ENCODE measurements at regions of chr10 and their contacts with region 1.

Region 1: DNA sequence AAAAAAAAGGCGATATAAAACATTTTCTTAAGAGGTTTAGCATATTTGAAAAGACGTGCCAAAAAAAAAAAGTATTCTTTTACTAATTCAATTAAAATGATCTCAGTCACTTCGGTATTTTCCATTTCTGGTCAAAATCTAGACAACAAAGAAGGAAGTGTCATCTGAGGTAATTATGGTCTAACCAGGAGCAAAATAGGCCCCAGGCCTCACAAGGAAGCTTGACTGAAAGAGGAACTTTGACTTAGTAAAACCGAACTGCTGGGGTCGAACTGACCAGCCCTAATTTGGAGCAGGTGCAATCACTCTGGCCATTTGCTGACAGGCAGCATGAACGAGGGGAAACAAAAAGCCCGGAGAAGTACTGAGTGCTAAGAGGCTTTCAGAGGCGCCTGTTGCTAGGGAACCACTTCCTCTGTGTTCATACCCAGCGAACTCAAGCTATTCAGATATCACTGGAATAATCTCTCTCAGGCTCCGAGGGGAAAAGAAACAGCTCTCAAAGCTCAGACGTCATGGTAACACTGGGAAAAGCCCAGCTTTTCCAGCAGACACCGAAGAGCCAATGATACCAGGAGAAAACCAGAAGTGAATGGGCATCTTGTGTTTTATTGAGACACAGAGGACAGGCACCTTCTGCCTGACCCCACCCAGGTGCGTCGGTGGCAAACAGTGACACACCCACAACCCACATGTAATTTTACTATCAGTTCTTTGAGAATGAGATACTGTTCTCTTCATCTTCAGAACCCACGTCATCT is 126.5 kb downstream of the FAM107B start:
- DNase-seq: peak; percentile 52 to 92 (median 74)
- ATAC-seq: peak; percentile 86
- H3K4me3 ChIP-seq: peak overlapping the region; percentile 41 to 50
- H3K4me3 Mint-ChIP-seq: peak overlapping the region; percentile 86
- H3K27ac ChIP-seq: peak overlapping the region; percentile 89 to 94
- H3K27ac Mint-ChIP-seq: peak overlapping the region; percentile 99
- H3K4me1 ChIP-seq: peaks cover 26% of the 10 kb centered on the region
- H3K4me1 Mint-ChIP-seq: peaks cover 48% of the 10 kb centered on the region
- H3K27me3 ChIP-seq: no peaks in the 10 kb centered on the region
- H3K27me3 Mint-ChIP-seq: no peaks in the 10 kb centered on the region
- CTCF ChIP-seq: no peak

Region 2: GRCh38 chr10:14564268-14564744 is 83.9 kb before region 1 on chr10:
- CTCF ChIA-PET with region 1: interaction called, 7 read pairs
- POLR2A ChIA-PET with region 1: interaction called, 4 read pairs
- intact Hi-C with region 1: loop called (anchors 2 to 5 kb)
- DNase-seq: peak in 3 of 9 experiments; percentile 45 to 85 (median 75)
- ATAC-seq: peak; percentile 57
- H3K4me3 ChIP-seq: peak overlapping the region in 1 of 2 experiments; percentile 21
- H3K4me3 Mint-ChIP-seq: peak overlapping the region; percentile 80
- H3K27ac ChIP-seq: peak overlapping the region; percentile 77 to 79
- H3K27ac Mint-ChIP-seq: peak overlapping the region; percentile 98
- H3K4me1 ChIP-seq: peaks cover 90% of the 10 kb centered on the region
- H3K4me1 Mint-ChIP-seq: peaks cover 88% of the 10 kb centered on the region
- H3K27me3 ChIP-seq: no peaks in the 10 kb centered on the region
- H3K27me3 Mint-ChIP-seq: no peaks in the 10 kb centered on the region
- CTCF ChIP-seq: no peak

Region 3: GRCh38 chr10:14571866-14572507 is 76.2 kb before region 1 on chr10:
- CTCF ChIA-PET with region 1: no interaction called
- POLR2A ChIA-PET with region 1: interaction called, 4 read pairs
- intact Hi-C with region 1: loop called in 1 of 2 experiments (anchors 1 kb)
- DNase-seq: peak; percentile 46 to 91 (median 68)
- ATAC-seq: peak; percentile 66
- H3K4me3 ChIP-seq: peak overlapping the region; percentile 58 to 65
- H3K4me3 Mint-ChIP-seq: peak overlapping the region; percentile 88
- H3K27ac ChIP-seq: peak overlapping the region; percentile 82 to 89
- H3K27ac Mint-ChIP-seq: peak overlapping the region; percentile 97
- H3K4me1 ChIP-seq: peaks cover 66% of the 10 kb centered on the region
- H3K4me1 Mint-ChIP-seq: peaks cover 89% of the 10 kb centered on the region
- H3K27me3 ChIP-seq: no peaks in the 10 kb centered on the region
- H3K27me3 Mint-ChIP-seq: no peaks in the 10 kb centered on the region
- CTCF ChIP-seq: no peak

Region 4: GRCh38 chr10:14604181-14605142 is 43.7 kb before region 1 on chr10:
- CTCF ChIA-PET with region 1: no interaction called
- POLR2A ChIA-PET with region 1: no interaction called
- intact Hi-C with region 1: loop called (anchors 1 to 2 kb)
- DNase-seq: peak; percentile 39 to 86 (median 73)
- ATAC-seq: peak; percentile 71
- H3K4me3 ChIP-seq: peak overlapping the region; percentile 55 to 66
- H3K4me3 Mint-ChIP-seq: peak overlapping the region; percentile 93
- H3K27ac ChIP-seq: peak overlapping the region; percentile 48
- H3K27ac Mint-ChIP-seq: peak overlapping the region; percentile 94
- H3K4me1 ChIP-seq: peaks cover 44% of the 10 kb centered on the region
- H3K4me1 Mint-ChIP-seq: peaks cover 50% of the 10 kb centered on the region
- H3K27me3 ChIP-seq: no peaks in the 10 kb centered on the region
- H3K27me3 Mint-ChIP-seq: no peaks in the 10 kb centered on the region
- CTCF ChIP-seq: peak; percentile 16

Region 5: DNA sequence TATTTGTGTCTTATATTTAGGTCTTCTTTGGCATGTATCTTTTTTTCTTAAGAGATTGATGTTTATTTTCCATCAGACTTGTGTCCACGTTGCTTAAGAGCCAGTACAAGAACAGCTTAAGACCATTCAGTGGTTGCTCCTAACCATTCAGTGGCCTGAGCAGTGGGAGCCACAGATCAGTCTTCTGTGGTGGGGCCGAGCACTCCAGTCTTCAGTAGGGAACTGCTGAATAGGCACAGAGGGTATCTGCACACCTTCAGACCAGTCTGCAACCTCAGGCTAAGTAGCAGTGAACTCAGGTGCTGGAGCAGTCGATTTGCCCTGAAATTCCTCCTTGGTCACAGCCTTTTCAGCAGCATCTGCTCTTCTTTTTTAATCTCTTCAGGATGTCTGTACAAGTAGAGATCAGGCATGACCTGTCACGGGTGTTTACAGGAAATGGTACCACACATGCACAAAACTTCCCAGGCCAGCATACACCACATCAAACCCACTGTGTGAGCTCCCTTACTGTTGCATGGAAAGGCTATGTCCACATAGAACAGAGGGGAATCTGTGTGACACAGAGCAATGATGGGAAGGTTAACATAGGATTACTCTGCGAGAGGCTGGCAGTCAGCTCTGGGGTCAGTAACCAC is 75.0 kb after region 1 on chr10:
- CTCF ChIA-PET with region 1: no interaction called
- POLR2A ChIA-PET with region 1: no interaction called
- intact Hi-C with region 1: loop called in 1 of 2 experiments (anchors 1 kb)
- DNase-seq: peak in 6 of 9 experiments; percentile 15 to 74 (median 50)
- ATAC-seq: peak; percentile 67
- H3K4me3 ChIP-seq: no peak overlapping the region
- H3K4me3 Mint-ChIP-seq: peak overlapping the region; percentile 17
- H3K27ac ChIP-seq: peak overlapping the region in 1 of 2 experiments; percentile 58
- H3K27ac Mint-ChIP-seq: peak overlapping the region; percentile 84
- H3K4me1 ChIP-seq: peaks cover 36% of the 10 kb centered on the region
- H3K4me1 Mint-ChIP-seq: peaks cover 34% of the 10 kb centered on the region
- H3K27me3 ChIP-seq: no peaks in the 10 kb centered on the region
- H3K27me3 Mint-ChIP-seq: no peaks in the 10 kb centered on the region
- CTCF ChIP-seq: no peak

Region 6: GRCh38 chr10:14878266-14879054 is 230.3 kb after region 1 on chr10 and contains the start of gene SUV39H2:
- CTCF ChIA-PET with region 1: no interaction called
- POLR2A ChIA-PET with region 1: no interaction called
- intact Hi-C with region 1: loop called in 1 of 2 experiments (anchors 1 kb)
- DNase-seq: peak; percentile 78 to 96 (median 92)
- ATAC-seq: peak; percentile 80
- H3K4me3 ChIP-seq: peak within 1 kb of the TSS; percentile 92 to 94
- H3K4me3 Mint-ChIP-seq: peak within 1 kb of the TSS; percentile 96
- H3K27ac ChIP-seq: peak within 1 kb of the TSS; percentile 67 to 69
- H3K27ac Mint-ChIP-seq: peak within 1 kb of the TSS; percentile 79
- H3K4me1 ChIP-seq: peaks cover 26% of the 10 kb centered on the region
- H3K4me1 Mint-ChIP-seq: peaks cover 31% of the 10 kb centered on the region
- H3K27me3 ChIP-seq: no peaks in the 10 kb centered on the region
- H3K27me3 Mint-ChIP-seq: no peaks in the 10 kb centered on the region
- CTCF ChIP-seq: no peak
- total RNA-seq, gene SUV39H2: 2.6 to 3.1 TPM

Measured in CD8-positive, alpha-beta T cell (primary cell).